CD4-positive, alpha-beta T cell (primary cell): ENCODE measurements at regions of chr17 and their contacts with region 1.

Region 1: DNA sequence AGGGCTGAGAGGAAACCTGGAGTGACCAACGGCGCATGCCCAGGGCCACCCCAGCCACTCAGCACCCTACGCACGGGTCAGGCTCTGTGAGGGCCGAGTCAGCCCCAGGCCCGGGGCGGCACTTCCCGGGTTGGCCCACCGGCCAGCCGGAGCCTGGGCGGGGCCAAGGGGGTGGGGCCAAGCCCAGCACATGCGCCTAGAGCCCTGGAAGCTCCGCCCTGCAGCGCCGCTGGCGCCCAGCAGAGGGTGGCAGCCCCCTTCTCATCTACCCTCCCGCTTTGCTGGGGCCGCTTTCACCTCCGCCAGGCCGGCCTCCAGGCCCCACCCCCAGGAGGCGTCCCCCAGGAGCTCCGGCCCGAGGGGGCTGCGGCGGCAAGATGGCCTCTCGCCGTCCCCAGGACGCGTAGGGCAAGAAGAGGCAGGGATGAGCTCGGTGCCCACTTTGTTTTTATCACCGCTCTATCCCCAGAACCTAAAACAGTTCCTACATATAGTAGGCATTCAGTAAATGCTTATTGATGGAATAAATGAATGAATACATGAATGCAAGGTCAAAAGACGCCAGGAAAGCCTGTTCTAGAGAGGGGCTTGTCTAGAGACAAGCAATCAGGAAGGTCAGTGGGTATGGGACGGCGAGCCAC is 31.3 kb downstream of the MYO18A start:
- DNase-seq: peak; percentile 82 to 95 (median 88)
- ATAC-seq: peak; percentile 92
- H3K4me3 ChIP-seq: peak overlapping the region; percentile 44
- H3K4me3 Mint-ChIP-seq: peak overlapping the region; percentile 78
- H3K27ac ChIP-seq: peak overlapping the region; percentile 60 to 83
- H3K27ac Mint-ChIP-seq: peak overlapping the region; percentile 67
- H3K4me1 ChIP-seq: peaks cover 31% of the 10 kb centered on the region
- H3K4me1 Mint-ChIP-seq: peaks cover 43% of the 10 kb centered on the region
- H3K27me3 ChIP-seq: no peaks in the 10 kb centered on the region
- H3K27me3 Mint-ChIP-seq: no peaks in the 10 kb centered on the region
- CTCF ChIP-seq: peak; percentile 98

Region 2: GRCh38 chr17:29116804-29117772 is 31.8 kb before region 1 on chr17:
- CTCF ChIA-PET with region 1: interaction called, 94 read pairs
- POLR2A ChIA-PET with region 1: interaction called, 3 read pairs
- intact Hi-C with region 1: no loop called
- DNase-seq: peak; percentile 70 to 87 (median 74)
- ATAC-seq: peak; percentile 91
- H3K4me3 ChIP-seq: no peak overlapping the region
- H3K4me3 Mint-ChIP-seq: no peak overlapping the region
- H3K27ac ChIP-seq: no peak overlapping the region
- H3K27ac Mint-ChIP-seq: no peak overlapping the region
- H3K4me1 ChIP-seq: peaks cover 11% of the 10 kb centered on the region
- H3K4me1 Mint-ChIP-seq: peaks cover 5% of the 10 kb centered on the region
- H3K27me3 ChIP-seq: no peaks in the 10 kb centered on the region
- H3K27me3 Mint-ChIP-seq: no peaks in the 10 kb centered on the region
- CTCF ChIP-seq: peak; percentile 98

Region 3: DNA sequence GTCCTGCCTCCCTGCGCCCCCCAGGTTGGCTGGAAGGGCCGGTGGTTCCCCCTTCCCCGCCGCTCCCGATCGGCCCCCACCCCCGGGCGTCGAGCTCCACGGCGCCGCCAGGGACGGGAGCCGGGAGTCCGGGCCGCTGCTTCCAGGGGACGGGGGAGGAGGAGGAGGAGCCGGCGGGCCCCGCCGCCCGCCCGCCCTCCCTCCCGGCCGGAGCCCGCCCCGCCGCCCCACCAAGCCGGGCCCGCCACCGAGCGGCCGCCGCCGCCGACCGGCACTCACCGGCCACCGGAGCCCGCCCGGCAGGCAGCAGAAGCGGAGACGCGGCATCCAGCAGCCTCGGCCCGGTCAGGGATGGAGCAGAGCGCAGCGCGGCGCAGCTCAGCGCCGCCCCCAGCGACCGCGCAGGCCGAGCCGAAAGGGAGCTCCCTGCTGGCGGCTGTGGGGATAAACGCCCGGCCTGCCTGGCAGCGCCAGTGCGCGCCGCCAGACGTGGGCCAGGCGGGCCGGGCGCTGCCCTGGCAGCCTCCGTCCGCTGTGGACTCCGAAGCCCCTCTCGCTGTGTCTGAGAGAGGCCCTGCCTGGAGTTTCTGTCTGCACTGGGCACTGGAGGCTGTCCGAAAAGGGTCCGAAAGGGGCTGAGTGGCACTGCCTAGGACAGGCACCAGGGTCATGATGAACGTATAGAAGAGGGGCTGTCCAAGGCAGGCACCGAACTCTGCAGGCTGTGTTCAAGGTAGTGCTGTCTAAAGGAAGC is 31.3 kb after region 1 on chr17 and contains the start of gene MYO18A:
- CTCF ChIA-PET with region 1: interaction called, 216 read pairs
- POLR2A ChIA-PET with region 1: interaction called, 36 read pairs
- intact Hi-C with region 1: loop called (anchors 1 kb)
- DNase-seq: peak; percentile 53 to 90 (median 76)
- ATAC-seq: peak; percentile 91
- H3K4me3 ChIP-seq: peak within 1 kb of the TSS; percentile 21
- H3K4me3 Mint-ChIP-seq: peak within 1 kb of the TSS; percentile 75
- H3K27ac ChIP-seq: no peak within 1 kb of the TSS
- H3K27ac Mint-ChIP-seq: no peak within 1 kb of the TSS
- H3K4me1 ChIP-seq: peaks cover 45% of the 10 kb centered on the region
- H3K4me1 Mint-ChIP-seq: peaks cover 34% of the 10 kb centered on the region
- H3K27me3 ChIP-seq: no peaks in the 10 kb centered on the region
- H3K27me3 Mint-ChIP-seq: no peaks in the 10 kb centered on the region
- CTCF ChIP-seq: peak; percentile 75
- total RNA-seq, gene MYO18A: 87.0 to 90.1 TPM

Region 4: GRCh38 chr17:29293890-29294579 is 145.1 kb after region 1 on chr17 and contains the start of gene NUFIP2:
- CTCF ChIA-PET with region 1: interaction called, 17 read pairs
- POLR2A ChIA-PET with region 1: interaction called, 11 read pairs
- intact Hi-C with region 1: loop called (anchors 1 to 2 kb)
- DNase-seq: peak; percentile 95 to 100 (median 98)
- ATAC-seq: peak; percentile 84
- H3K4me3 ChIP-seq: peak within 1 kb of the TSS; percentile 98
- H3K4me3 Mint-ChIP-seq: peak within 1 kb of the TSS; percentile 99
- H3K27ac ChIP-seq: peak within 1 kb of the TSS; percentile 82 to 92
- H3K27ac Mint-ChIP-seq: peak within 1 kb of the TSS; percentile 96
- H3K4me1 ChIP-seq: peaks cover 20% of the 10 kb centered on the region
- H3K4me1 Mint-ChIP-seq: peaks cover 47% of the 10 kb centered on the region
- H3K27me3 ChIP-seq: no peaks in the 10 kb centered on the region
- H3K27me3 Mint-ChIP-seq: no peaks in the 10 kb centered on the region
- CTCF ChIP-seq: no peak
- total RNA-seq, gene NUFIP2: 78.4 to 82.2 TPM

Region 5: GRCh38 chr17:29533976-29534375 is 385.1 kb after region 1 on chr17:
- CTCF ChIA-PET with region 1: no interaction called
- POLR2A ChIA-PET with region 1: no interaction called
- intact Hi-C with region 1: loop called in 1 of 2 experiments (anchors 5 kb)
- DNase-seq: no peak
- ATAC-seq: no peak
- H3K4me3 ChIP-seq: no peak overlapping the region
- H3K4me3 Mint-ChIP-seq: no peak overlapping the region
- H3K27ac ChIP-seq: no peak overlapping the region
- H3K27ac Mint-ChIP-seq: no peak overlapping the region
- H3K4me1 ChIP-seq: no peaks in the 10 kb centered on the region
- H3K4me1 Mint-ChIP-seq: no peaks in the 10 kb centered on the region
- H3K27me3 ChIP-seq: no peaks in the 10 kb centered on the region
- H3K27me3 Mint-ChIP-seq: no peaks in the 10 kb centered on the region
- CTCF ChIP-seq: no peak

Region 6: GRCh38 chr17:29855686-29856085 is 706.8 kb after region 1 on chr17:
- CTCF ChIA-PET with region 1: no interaction called
- POLR2A ChIA-PET with region 1: no interaction called
- intact Hi-C with region 1: no loop called
- DNase-seq: no peak
- ATAC-seq: no peak
- H3K4me3 ChIP-seq: no peak overlapping the region
- H3K4me3 Mint-ChIP-seq: no peak overlapping the region
- H3K27ac ChIP-seq: no peak overlapping the region
- H3K27ac Mint-ChIP-seq: no peak overlapping the region
- H3K4me1 ChIP-seq: no peaks in the 10 kb centered on the region
- H3K4me1 Mint-ChIP-seq: peaks cover 17% of the 10 kb centered on the region
- H3K27me3 ChIP-seq: no peaks in the 10 kb centered on the region
- H3K27me3 Mint-ChIP-seq: no peaks in the 10 kb centered on the region
- CTCF ChIP-seq: no peak